HepG2 (cell line): ENCODE measurements at regions of chr15 and their contacts with region 1.

Region 1: DNA sequence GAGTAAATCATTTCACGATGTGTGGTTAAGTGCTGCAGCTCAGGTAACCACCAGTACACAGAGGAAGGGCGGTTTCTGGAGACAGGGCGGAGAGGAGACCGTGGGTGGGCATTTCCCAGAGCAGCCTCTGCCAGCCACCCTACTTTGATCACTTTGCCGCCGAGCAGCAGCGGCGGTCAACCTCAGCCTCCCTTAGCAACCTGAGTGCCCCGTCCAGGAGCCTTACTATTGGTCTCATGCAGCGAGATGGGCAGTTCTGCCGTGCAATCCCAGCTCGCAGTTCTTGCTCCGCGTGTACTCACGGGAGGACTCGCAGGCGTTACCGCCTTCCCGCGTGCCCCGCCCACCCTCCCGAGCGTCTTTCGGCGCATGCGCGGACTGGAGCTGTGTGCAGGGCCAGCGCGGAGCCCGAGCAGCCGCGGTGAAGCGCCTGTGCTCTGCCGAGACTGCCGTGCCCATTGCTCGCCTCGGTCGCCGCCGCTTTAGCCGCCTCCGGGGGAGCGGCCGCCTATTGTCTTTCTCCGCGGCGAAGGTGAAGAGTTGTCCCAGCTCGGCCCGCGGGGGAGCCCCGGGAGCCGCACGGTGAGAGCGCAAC is at the start of gene AKAP13:
- DNase-seq: peak; percentile 98
- ATAC-seq: peak; percentile 95
- H3K4me3 ChIP-seq: peak within 1 kb of the TSS; percentile 74 to 88 (median 85)
- H3K27ac ChIP-seq: peak within 1 kb of the TSS; percentile 93
- H3K4me1 ChIP-seq: peaks cover 45% of the 10 kb centered on the region
- H3K27me3 ChIP-seq: peaks cover 0 to 9% of the 10 kb centered on the region in 2 experiments; a peak in 2 of 5 replicates
- CTCF ChIP-seq: no peak
- EP300 ChIP-seq: no peak
- POLR2A ChIP-seq: peak; percentile 84 to 90
- RAD21 ChIP-seq: peak; percentile 22; the same call in 1 of the 2 replicates
- total RNA-seq, gene AKAP13: 27.1 and 30.8 TPM in 2 replicates

Region 2: DNA sequence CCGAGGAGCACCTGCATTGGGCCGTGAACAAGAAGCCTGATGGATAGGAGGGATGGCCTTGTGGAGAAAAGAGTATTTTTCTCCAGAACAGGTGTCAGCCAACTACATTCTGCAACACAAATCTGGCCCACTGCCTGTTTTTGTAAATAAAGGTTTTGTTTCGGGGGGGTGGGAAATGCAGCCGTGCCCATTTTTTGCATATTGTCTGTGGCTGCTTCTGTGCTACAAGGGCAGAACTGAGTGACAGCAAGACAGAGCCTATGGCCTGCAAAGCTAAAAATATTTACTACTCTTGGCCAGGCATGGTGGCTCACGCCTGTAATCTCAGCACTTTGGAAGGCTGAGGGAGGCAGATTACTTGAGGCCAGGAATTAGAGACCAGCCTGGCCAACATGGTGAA is 95.8 kb before region 1 on chr15:
- CTCF ChIA-PET with region 1: no interaction called
- POLR2A ChIA-PET with region 1: no interaction called
- in situ Hi-C with region 1: no loop called
- intact Hi-C with region 1: no loop called
- DNase-seq: no peak
- ATAC-seq: no peak
- H3K4me3 ChIP-seq: no peak overlapping the region
- H3K27ac ChIP-seq: no peak overlapping the region
- H3K4me1 ChIP-seq: no peaks in the 10 kb centered on the region
- H3K27me3 ChIP-seq: peaks cover 2 to 24% of the 10 kb centered on the region in 2 experiments; a peak in 1 of 5 replicates
- CTCF ChIP-seq: no peak
- EP300 ChIP-seq: no peak
- POLR2A ChIP-seq: no peak
- RAD21 ChIP-seq: no peak

Region 3: GRCh38 chr15:85402195-85402881 is 22.0 kb after region 1 on chr15:
- CTCF ChIA-PET with region 1: no interaction called
- POLR2A ChIA-PET with region 1: interaction called, 3 read pairs
- in situ Hi-C with region 1: no loop called
- intact Hi-C with region 1: loop called (anchors 2 kb)
- DNase-seq: no peak
- ATAC-seq: no peak
- H3K4me3 ChIP-seq: no peak overlapping the region
- H3K27ac ChIP-seq: no peak overlapping the region
- H3K4me1 ChIP-seq: peaks cover 29% of the 10 kb centered on the region
- H3K27me3 ChIP-seq: no peaks in the 10 kb centered on the region
- CTCF ChIP-seq: no peak
- EP300 ChIP-seq: no peak
- POLR2A ChIP-seq: no peak
- RAD21 ChIP-seq: no peak